ENCODE measurements at regions of chr12 and their contacts with region 1.

Region 1: GRCh38 chr12:50986966-50987737 is 34.8 kb downstream of the HIGD1C start:
- DNase-seq: no peak
- H3K4me3 ChIP-seq: no peak overlapping the region
- H3K27ac ChIP-seq: no peak overlapping the region
- H3K4me1 ChIP-seq: peaks cover 0 to 24% (median 6%) of the 10 kb centered on the region in 6 donors
- H3K27me3 ChIP-seq: no peaks in the 10 kb centered on the region
- CTCF ChIP-seq: peak in 8 of 11 experiments; percentile 34 to 62 (median 51)
- POLR2A ChIP-seq: no peak

Region 2: DNA sequence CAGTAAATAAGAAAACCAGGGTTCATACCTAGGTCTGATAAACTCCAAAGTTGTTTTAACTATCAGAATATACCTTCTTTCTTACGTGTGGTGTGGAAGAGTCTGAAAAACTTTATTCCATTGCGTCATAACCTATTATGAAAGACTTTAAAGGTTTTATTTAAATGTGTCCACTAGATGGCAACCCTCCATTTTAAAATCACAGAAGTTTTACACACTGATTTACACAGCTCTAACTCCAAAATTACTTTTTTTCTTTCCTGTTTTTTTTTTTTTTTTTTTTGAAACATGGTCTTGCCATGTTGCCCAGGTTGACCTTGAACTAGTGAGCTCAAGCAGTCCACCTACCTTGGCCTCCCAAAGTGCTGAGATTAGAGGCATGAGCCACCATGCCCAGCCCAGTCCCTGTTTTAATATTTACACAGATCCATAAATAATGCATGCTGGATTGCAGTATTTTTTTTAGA is 161.7 kb before region 1 on chr12:
- intact Hi-C with region 1: loop called (anchors 2 kb)
- DNase-seq: no peak
- H3K4me3 ChIP-seq: no peak overlapping the region
- H3K27ac ChIP-seq: peak overlapping the region in 4 of 8 donors; percentile 23 to 50 (median 42)
- H3K4me1 ChIP-seq: peaks cover 0 to 12% (median 10%) of the 10 kb centered on the region in 6 donors
- H3K27me3 ChIP-seq: no peaks in the 10 kb centered on the region
- CTCF ChIP-seq: peak; percentile 19 to 87 (median 58)
- POLR2A ChIP-seq: no peak

Region 3: GRCh38 chr12:50894241-50894640 is 92.9 kb before region 1 on chr12:
- intact Hi-C with region 1: no loop called
- DNase-seq: no peak
- H3K4me3 ChIP-seq: no peak overlapping the region
- H3K27ac ChIP-seq: no peak overlapping the region
- H3K4me1 ChIP-seq: no peaks in the 10 kb centered on the region
- H3K27me3 ChIP-seq: no peaks in the 10 kb centered on the region
- CTCF ChIP-seq: no peak
- POLR2A ChIP-seq: no peak

Region 4: GRCh38 chr12:50971946-50972345 is 15.2 kb before region 1 on chr12:
- intact Hi-C with region 1: no loop called
- DNase-seq: no peak
- H3K4me3 ChIP-seq: no peak overlapping the region
- H3K27ac ChIP-seq: no peak overlapping the region
- H3K4me1 ChIP-seq: no peaks in the 10 kb centered on the region
- H3K27me3 ChIP-seq: no peaks in the 10 kb centered on the region
- CTCF ChIP-seq: no peak
- POLR2A ChIP-seq: no peak